ENCODE measurements at regions of chr1 and their contacts with region 1.

Region 1: GRCh38 chr1:21270086-21270689 is 20.1 kb downstream of the ECE1 start:
- DNase-seq: peak; percentile 78 to 89 (median 84)
- ATAC-seq: peak; percentile 93
- H3K4me3 ChIP-seq: no peak overlapping the region
- H3K4me3 Mint-ChIP-seq: no peak overlapping the region
- H3K27ac ChIP-seq: no peak overlapping the region
- H3K27ac Mint-ChIP-seq: peak overlapping the region; percentile 9
- H3K4me1 ChIP-seq: peaks cover 17% of the 10 kb centered on the region
- H3K4me1 Mint-ChIP-seq: peaks cover 33% of the 10 kb centered on the region
- H3K27me3 ChIP-seq: no peaks in the 10 kb centered on the region
- H3K27me3 Mint-ChIP-seq: no peaks in the 10 kb centered on the region
- CTCF ChIP-seq: peak; percentile 89

Region 2: GRCh38 chr1:21216835-21217811 is 53.1 kb before region 1 on chr1:
- CTCF ChIA-PET with region 1: no interaction called
- POLR2A ChIA-PET with region 1: no interaction called
- intact Hi-C with region 1: no loop called
- DNase-seq: peak; percentile 48 to 84 (median 61)
- ATAC-seq: peak; percentile 84
- H3K4me3 ChIP-seq: no peak overlapping the region
- H3K4me3 Mint-ChIP-seq: no peak overlapping the region
- H3K27ac ChIP-seq: no peak overlapping the region
- H3K27ac Mint-ChIP-seq: peak overlapping the region; percentile 22
- H3K4me1 ChIP-seq: no peaks in the 10 kb centered on the region
- H3K4me1 Mint-ChIP-seq: peaks cover 5% of the 10 kb centered on the region
- H3K27me3 ChIP-seq: no peaks in the 10 kb centered on the region
- H3K27me3 Mint-ChIP-seq: no peaks in the 10 kb centered on the region
- CTCF ChIP-seq: peak; percentile 83

Region 3: DNA sequence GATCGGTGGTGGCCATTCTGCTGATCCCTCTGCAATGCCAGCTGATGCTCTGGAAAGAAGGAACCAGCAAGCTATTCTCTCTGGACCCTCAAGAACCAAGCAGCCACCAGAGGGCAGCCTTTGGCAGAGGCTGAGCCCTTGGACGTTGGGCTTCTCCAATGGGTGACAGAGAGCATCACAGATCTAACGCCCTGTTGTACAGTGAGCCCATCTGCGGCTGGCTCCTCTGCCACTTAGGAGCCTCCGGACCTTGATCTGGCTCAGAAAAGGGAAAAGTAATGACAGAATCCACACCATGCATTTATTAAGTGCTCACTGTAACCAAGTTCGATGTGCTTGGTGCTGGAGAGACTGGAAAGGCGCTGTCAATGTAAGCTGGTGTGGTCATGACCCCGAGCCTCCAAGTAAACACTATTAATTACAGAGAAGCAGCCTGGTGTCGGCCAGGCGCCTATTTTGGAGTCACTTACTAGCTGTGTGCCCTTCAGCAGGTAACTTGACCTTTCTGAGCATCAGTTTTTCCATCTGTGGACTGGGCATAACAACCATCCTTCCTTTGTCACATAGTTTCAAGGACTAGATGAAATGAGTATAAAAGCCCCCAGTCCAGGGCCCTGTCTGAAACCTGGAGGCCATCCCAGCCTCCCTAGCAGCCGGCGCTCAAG is 14.8 kb before region 1 on chr1:
- CTCF ChIA-PET with region 1: interaction called, 38 read pairs
- POLR2A ChIA-PET with region 1: interaction called, 4 read pairs
- intact Hi-C with region 1: no loop called
- DNase-seq: peak; percentile 78 to 90 (median 83)
- ATAC-seq: peak; percentile 87
- H3K4me3 ChIP-seq: no peak overlapping the region
- H3K4me3 Mint-ChIP-seq: no peak overlapping the region
- H3K27ac ChIP-seq: no peak overlapping the region
- H3K27ac Mint-ChIP-seq: peak overlapping the region; percentile 19
- H3K4me1 ChIP-seq: peaks cover 28% of the 10 kb centered on the region
- H3K4me1 Mint-ChIP-seq: peaks cover 25% of the 10 kb centered on the region
- H3K27me3 ChIP-seq: no peaks in the 10 kb centered on the region
- H3K27me3 Mint-ChIP-seq: no peaks in the 10 kb centered on the region
- CTCF ChIP-seq: peak; percentile 78

Region 4: DNA sequence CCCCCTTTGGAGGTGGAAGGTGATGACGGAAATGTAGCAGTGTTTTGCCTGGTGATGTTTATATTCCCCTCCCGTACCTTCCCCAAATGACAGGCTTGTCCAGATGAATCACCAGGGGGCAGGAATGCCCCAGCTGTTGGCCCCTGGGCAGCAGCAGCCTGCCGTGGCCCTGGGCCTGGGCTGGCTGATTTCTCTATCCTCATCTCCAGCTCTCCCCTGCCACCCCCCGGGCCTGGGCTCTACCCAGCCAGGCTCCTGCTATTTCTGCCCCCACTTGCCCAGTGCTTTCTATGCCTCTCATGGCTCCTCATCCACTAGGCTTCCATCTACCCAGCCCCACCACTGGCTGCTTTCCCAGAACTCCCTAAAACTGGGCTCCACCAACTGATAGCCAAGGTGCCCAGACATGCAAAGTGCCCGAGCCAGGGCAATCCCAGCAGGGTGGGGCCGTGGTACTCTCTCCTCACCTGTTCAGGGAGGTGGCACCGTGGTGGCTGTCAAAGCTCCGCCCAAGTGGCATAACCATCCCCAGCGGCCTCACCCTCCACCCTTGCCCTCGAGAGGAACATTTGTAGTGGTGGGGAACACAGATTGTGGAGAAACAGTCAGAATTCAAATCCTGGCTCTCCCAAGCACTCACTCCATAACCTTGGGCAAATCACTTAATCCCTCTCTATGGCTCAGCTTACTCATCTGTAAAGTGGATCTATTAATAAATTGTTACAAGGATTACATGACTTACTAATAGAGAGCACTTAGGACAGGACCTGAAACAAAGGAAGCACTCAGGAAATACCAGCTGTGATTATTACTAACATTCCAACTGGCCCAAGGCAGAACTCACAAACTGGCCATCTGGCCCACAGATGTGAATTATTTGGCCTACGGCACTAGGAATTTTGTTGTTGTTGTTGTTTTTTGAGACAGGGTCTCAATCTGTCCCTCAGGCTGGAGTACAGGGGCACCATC is 32.8 kb after region 1 on chr1:
- CTCF ChIA-PET with region 1: interaction called, 39 read pairs
- POLR2A ChIA-PET with region 1: interaction called, 8 read pairs
- intact Hi-C with region 1: no loop called
- DNase-seq: peak in 1 of 14 experiments; percentile 49
- ATAC-seq: no peak
- H3K4me3 ChIP-seq: no peak overlapping the region
- H3K4me3 Mint-ChIP-seq: no peak overlapping the region
- H3K27ac ChIP-seq: no peak overlapping the region
- H3K27ac Mint-ChIP-seq: peak overlapping the region; percentile 69
- H3K4me1 ChIP-seq: peaks cover 77% of the 10 kb centered on the region
- H3K4me1 Mint-ChIP-seq: peaks cover 79% of the 10 kb centered on the region
- H3K27me3 ChIP-seq: no peaks in the 10 kb centered on the region
- H3K27me3 Mint-ChIP-seq: no peaks in the 10 kb centered on the region
- CTCF ChIP-seq: no peak

Region 5: GRCh38 chr1:21324368-21325141 is 54.4 kb after region 1 on chr1:
- CTCF ChIA-PET with region 1: interaction called, 36 read pairs
- POLR2A ChIA-PET with region 1: interaction called, 4 read pairs
- intact Hi-C with region 1: loop called in 1 of 2 experiments (anchors 2 kb)
- DNase-seq: peak in 12 of 14 experiments; percentile 35 to 83 (median 52)
- ATAC-seq: peak; percentile 65
- H3K4me3 ChIP-seq: peak overlapping the region; percentile 24
- H3K4me3 Mint-ChIP-seq: peak overlapping the region; percentile 70
- H3K27ac ChIP-seq: peak overlapping the region; percentile 73 to 76
- H3K27ac Mint-ChIP-seq: peak overlapping the region; percentile 93
- H3K4me1 ChIP-seq: peaks cover 77% of the 10 kb centered on the region
- H3K4me1 Mint-ChIP-seq: peaks cover 88% of the 10 kb centered on the region
- H3K27me3 ChIP-seq: no peaks in the 10 kb centered on the region
- H3K27me3 Mint-ChIP-seq: no peaks in the 10 kb centered on the region
- CTCF ChIP-seq: no peak

Region 6: DNA sequence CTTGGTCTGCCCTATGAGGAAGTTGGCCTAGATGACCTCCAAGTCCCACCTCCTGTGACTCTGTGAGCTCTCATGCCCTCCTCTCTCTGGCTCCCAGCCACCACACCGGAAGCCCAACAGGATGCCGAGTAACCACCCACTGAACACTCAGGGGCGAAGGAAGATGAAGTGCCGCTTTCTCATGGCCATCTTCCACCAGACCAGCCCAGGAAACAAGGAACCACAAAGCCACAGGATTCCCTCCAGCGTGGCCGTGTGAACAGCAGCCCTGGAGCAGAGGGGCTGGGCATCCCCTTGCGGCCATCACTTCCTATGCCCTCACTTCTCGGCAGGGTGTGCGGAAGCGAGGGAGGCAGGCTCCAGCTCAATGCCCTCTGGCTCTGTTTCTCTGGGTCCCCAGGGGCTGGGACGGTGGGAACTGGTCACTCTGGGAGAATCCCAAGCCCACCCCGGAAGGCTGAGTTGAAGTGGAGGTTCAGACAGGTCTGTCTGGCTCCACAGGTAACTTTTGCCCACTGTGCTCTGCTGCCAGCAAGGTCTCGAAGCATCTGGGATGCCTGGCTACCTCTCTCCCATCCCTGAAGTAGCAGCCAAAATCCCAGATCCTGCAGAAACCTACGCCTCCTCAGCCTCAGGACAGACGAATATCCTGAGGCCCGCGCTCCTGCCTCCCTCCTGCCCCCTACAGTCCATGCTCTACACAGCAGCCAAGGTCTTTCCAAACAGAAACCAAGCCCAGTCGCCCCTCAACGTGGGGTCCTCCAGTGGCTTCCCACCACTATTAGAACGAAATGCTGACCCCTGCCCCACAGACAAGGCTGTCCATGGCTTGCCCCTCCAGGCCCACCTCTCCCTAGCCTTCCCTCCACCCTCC is 64.3 kb after region 1 on chr1:
- CTCF ChIA-PET with region 1: interaction called, 33 read pairs
- POLR2A ChIA-PET with region 1: interaction called, 10 read pairs
- intact Hi-C with region 1: no loop called
- DNase-seq: peak; percentile 60 to 96 (median 74)
- ATAC-seq: peak; percentile 80
- H3K4me3 ChIP-seq: peak overlapping the region; percentile 50
- H3K4me3 Mint-ChIP-seq: peak overlapping the region; percentile 92
- H3K27ac ChIP-seq: peak overlapping the region; percentile 81 to 89
- H3K27ac Mint-ChIP-seq: peak overlapping the region; percentile 98
- H3K4me1 ChIP-seq: peaks cover 97% of the 10 kb centered on the region
- H3K4me1 Mint-ChIP-seq: peaks cover 89% of the 10 kb centered on the region
- H3K27me3 ChIP-seq: no peaks in the 10 kb centered on the region
- H3K27me3 Mint-ChIP-seq: no peaks in the 10 kb centered on the region
- CTCF ChIP-seq: peak; percentile 66

Region 7: GRCh38 chr1:21385022-21385421 is 114.8 kb after region 1 on chr1:
- CTCF ChIA-PET with region 1: no interaction called
- POLR2A ChIA-PET with region 1: no interaction called
- intact Hi-C with region 1: no loop called
- DNase-seq: no peak
- ATAC-seq: no peak
- H3K4me3 ChIP-seq: no peak overlapping the region
- H3K4me3 Mint-ChIP-seq: no peak overlapping the region
- H3K27ac ChIP-seq: no peak overlapping the region
- H3K27ac Mint-ChIP-seq: no peak overlapping the region
- H3K4me1 ChIP-seq: no peaks in the 10 kb centered on the region
- H3K4me1 Mint-ChIP-seq: no peaks in the 10 kb centered on the region
- H3K27me3 ChIP-seq: no peaks in the 10 kb centered on the region
- H3K27me3 Mint-ChIP-seq: peaks cover 23% of the 10 kb centered on the region
- CTCF ChIP-seq: no peak